ENCODE measurements at regions of chr14 and their contacts with region 1.

Region 1: DNA sequence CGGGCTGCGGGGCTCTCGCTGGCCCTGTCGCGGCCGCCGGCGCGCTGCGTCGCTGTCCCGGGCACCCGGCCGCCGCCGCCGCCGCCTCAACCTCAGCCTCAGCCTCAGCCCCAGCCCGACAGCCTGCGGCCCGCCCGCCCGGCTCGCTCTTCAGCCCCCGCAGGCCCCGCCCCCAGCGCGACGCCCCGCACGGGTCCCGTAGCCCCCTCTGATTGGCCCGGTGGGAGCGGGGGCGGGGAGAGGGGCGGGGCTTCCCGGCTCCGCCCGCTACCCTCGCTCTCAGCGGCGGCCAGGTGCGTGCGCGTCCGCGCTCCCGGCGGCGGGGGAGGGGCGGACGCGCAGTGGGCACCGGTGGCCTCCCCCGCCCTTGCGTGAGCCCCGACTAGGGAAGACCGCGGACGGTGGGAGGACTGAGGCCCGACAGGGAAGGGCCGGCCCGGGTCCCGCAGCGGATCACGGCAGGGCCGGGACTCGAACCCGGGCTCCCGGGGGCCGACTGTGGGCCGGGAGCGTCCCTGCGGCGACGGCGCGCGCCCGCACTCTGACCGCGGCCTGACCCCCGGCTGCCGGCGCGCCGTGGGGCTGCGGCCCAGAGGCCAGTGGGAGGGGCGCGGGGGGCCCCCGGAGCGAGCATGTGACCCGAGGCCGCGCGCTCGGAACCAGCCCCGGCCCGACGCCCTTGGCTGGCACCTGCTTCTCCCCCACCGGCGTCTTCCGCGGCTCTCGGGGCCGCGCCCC is at the start of gene PPP1R13B:
- DNase-seq: peak; percentile 63 to 94
- H3K4me3 ChIP-seq: peak within 1 kb of the TSS; percentile 90 to 97
- H3K27ac ChIP-seq: peak within 1 kb of the TSS; percentile 64 to 77
- H3K4me1 ChIP-seq: peaks cover 7 to 10% of the 10 kb centered on the region in 2 donors
- H3K27me3 ChIP-seq: no peaks in the 10 kb centered on the region
- CTCF ChIP-seq: no peak
- total RNA-seq, gene PPP1R13B: 32.7 TPM

Region 2: DNA sequence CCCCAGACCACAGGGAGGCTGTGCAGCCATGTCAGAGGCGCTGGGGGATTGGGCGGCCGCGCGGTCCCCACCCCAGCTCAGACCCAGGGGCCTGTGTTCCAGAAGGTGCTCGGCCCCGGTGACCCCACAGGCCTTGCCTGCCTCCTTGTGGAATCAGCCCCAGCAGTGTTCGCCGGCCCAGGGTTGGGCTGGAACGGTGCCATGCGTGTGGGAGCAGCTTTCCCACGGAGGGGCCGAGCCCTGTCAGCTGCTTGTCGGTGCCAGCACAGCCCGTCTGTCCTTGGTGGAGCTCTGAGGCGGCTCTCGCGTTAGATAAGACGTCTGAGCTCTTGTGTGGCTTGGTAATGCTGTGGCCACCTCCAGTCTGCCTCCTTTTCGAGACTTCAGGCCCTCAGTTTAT is 123.5 kb before region 1 on chr14:
- intact Hi-C with region 1: loop called (anchors 5 kb)
- DNase-seq: peak in 1 of 2 donors; percentile 87
- H3K4me3 ChIP-seq: peak overlapping the region in 1 of 2 donors; percentile 39
- H3K27ac ChIP-seq: peak overlapping the region; percentile 86 to 87
- H3K4me1 ChIP-seq: peaks cover 16 to 38% of the 10 kb centered on the region in 2 donors
- H3K27me3 ChIP-seq: no peaks in the 10 kb centered on the region
- CTCF ChIP-seq: peak; percentile 11 to 41 (median 31)

Region 3: DNA sequence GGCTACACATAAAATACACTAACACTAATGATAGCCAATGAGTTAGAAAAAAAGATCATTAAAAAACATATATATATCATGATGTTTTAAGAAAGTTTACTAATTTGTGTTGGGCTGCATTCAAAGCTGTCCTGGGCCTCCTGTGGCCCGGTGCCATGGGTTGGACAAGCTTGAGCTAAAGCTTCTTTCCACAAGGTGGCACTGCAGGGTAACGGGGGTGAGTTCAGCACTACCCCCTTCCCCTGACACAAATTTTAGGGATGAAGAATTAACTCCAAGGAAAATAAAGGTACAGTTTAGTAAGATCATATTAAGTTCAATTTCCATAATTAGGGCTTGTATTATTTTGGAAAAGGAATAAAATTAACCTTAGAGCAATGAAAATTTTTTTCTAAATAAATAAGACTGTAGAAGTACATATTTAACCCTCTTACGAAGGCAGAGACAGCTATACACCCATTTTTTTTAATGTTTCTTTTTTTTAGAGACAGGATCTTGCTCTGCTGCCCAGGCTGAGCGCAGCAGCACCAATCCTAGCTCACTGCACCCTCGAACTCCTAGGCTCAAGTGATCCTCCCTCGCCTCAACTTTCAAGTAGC is 39.1 kb before region 1 on chr14:
- intact Hi-C with region 1: loop called (anchors 2 kb)
- DNase-seq: peak in 1 of 2 donors; percentile 73
- H3K4me3 ChIP-seq: no peak overlapping the region
- H3K27ac ChIP-seq: no peak overlapping the region
- H3K4me1 ChIP-seq: no peaks in the 10 kb centered on the region
- H3K27me3 ChIP-seq: no peaks in the 10 kb centered on the region
- CTCF ChIP-seq: peak; percentile 83 to 86 (median 85)

Region 4: GRCh38 chr14:103880348-103881267 is 33.0 kb after region 1 on chr14:
- intact Hi-C with region 1: loop called (anchors 2 kb)
- DNase-seq: peak; percentile 18 to 91
- H3K4me3 ChIP-seq: peak overlapping the region; percentile 24 to 49
- H3K27ac ChIP-seq: peak overlapping the region; percentile 54 to 66
- H3K4me1 ChIP-seq: peaks cover 8 to 22% of the 10 kb centered on the region in 2 donors
- H3K27me3 ChIP-seq: no peaks in the 10 kb centered on the region
- CTCF ChIP-seq: no peak

Region 5: GRCh38 chr14:103920981-103921854 is 73.6 kb after region 1 on chr14:
- intact Hi-C with region 1: loop called (anchors 1 kb)
- DNase-seq: peak; percentile 67 to 94
- H3K4me3 ChIP-seq: peak overlapping the region; percentile 65 to 84
- H3K27ac ChIP-seq: peak overlapping the region; percentile 58 to 59
- H3K4me1 ChIP-seq: peaks cover 6 to 7% of the 10 kb centered on the region in 2 donors
- H3K27me3 ChIP-seq: no peaks in the 10 kb centered on the region
- CTCF ChIP-seq: peak; percentile 97 to 98 (median 97)

Region 6: DNA sequence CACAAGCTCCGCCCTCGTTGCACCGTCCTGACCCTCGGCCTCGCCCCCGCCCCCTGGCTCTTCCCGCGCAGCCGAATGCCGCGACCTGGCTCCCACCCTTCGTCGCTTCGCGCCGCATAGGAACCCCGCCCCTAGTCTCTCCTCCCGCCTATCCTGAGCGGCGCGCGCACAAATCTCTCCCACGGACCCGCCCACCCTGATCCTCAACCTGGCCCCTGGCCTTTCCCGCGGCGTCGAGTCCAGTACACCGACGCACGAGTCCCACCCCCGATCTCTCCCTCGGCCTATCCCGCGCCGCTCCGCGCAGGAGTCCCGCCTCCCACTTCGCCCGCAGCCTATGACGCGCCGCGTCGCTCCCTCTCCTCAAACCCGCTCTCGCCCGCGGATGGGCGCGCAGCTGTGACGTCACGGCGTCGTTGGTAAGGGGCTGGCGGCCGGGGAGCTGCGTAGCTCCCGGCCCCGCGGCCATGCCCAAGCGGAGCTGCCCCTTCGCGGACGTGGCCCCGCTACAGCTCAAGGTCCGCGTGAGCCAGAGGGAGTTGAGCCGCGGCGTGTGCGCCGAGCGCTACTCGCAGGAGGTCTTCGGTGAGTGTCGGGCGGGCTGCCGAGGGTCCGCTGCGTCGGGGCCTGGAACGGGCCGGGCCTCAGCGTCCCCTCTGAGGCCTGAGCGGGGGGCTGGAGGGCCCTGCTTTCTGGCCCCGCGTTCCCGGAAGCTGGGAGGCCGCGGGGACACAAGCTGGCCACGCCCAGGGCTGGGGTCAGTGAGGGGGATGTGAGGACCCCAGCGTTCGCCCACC is 905.3 kb after region 1 on chr14 and contains the start of gene SIVA1:
- intact Hi-C with region 1: loop called (anchors 10 kb)
- DNase-seq: peak; percentile 98 to 100
- H3K4me3 ChIP-seq: peak within 1 kb of the TSS; percentile 89 to 99
- H3K27ac ChIP-seq: peak within 1 kb of the TSS; percentile 81 to 95
- H3K4me1 ChIP-seq: peaks cover 40 to 55% of the 10 kb centered on the region in 2 donors
- H3K27me3 ChIP-seq: no peaks in the 10 kb centered on the region
- CTCF ChIP-seq: no peak
- total RNA-seq, gene SIVA1: 410 TPM

Region 7: DNA sequence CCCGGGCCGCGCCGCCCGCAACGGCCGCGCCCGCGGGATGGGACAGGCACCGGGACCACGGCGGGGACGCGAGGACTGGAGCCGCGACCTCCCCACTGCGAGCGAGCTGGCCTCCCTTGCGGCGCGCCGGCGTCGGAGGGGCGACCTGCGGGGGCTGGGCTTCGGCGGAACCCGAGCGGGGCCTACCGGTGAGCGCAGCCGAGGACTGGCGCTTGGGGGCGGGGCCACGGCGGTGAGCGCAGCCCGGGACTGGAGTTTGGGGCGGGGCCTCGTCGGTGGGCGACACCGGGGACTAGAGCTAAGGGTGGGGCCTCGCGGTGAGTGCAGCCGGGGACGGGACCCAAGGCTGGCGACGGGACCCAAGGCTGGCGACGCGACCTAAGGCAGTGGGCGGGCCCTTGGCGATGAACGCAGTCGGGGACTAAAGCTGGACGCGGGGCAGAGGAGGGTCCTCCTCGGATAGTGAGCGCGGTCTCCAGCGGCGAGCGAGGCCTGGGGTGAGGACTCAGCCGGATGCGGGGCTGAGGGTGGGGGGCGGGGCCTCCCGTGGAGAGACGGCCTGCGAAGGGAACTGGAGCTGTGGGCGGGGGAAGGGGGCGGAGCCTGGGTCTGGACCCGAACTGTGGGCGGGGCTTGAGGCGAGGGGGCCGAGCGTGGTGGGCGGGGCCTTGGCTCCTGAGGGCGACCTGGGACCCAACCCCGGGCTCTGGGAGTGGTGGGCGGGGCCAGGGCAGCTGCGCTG is 1453.3 kb after region 1 on chr14 and contains the start of gene BRF1:
- intact Hi-C with region 1: loop called (anchors 10 kb)
- DNase-seq: peak; percentile 88 to 98
- H3K4me3 ChIP-seq: peak within 1 kb of the TSS; percentile 62 to 84
- H3K27ac ChIP-seq: peak within 1 kb of the TSS; percentile 93 to 96
- H3K4me1 ChIP-seq: peaks cover 8 to 14% of the 10 kb centered on the region in 2 donors
- H3K27me3 ChIP-seq: no peaks in the 10 kb centered on the region
- CTCF ChIP-seq: no peak
- total RNA-seq, gene BRF1: 60.9 TPM

Measured in ascending aorta (tissue), 2 donors.